ENCODE measurements at regions of chr15 and their contacts with region 1.

Region 1: GRCh38 chr15:73697033-73697467 is 12.9 kb downstream of the CD276 start:
- DNase-seq: peak in 1 of 2 experiments; percentile 60
- H3K4me3 ChIP-seq: no peak overlapping the region
- H3K27ac ChIP-seq: no peak overlapping the region
- H3K4me1 ChIP-seq: no peaks in the 10 kb centered on the region
- H3K27me3 ChIP-seq: no peaks in the 10 kb centered on the region
- CTCF ChIP-seq: no peak

Region 2: DNA sequence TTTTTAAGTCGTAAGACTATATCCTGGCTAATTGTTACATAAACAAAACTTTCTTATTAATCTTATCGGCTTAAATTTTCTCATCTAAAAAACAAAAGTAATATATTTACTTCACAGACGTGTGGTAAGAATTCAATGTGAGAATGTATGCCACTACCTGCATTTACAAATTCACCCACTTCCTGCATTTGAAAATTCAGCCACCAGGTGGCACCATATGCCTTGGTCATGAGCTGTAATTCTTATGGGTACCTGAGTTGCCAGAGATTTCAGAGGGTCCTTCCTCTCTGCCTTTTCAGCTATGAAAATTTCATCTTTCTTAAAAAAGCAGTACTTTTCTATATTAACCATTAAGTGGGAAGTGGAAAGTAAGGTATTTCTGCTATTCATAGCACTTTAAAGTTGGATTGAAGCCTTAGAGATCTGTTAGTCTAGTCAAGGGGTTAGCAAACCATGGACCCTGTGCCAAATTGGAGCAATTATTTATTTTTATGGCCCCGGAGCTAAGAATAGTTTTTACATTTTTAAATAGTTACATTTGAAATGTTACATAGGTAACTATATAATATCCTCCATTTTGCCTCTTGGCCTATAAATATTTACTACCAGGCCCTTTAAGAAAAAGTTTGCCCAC is 456.1 kb before region 1 on chr15:
- CTCF ChIA-PET with region 1: interaction called, 3 read pairs
- POLR2A ChIA-PET with region 1: no interaction called
- intact Hi-C with region 1: loop called (anchors 5 kb)
- DNase-seq: peak; percentile 49 to 53
- H3K4me3 ChIP-seq: no peak overlapping the region
- H3K27ac ChIP-seq: no peak overlapping the region
- H3K4me1 ChIP-seq: no peaks in the 10 kb centered on the region
- H3K27me3 ChIP-seq: no peaks in the 10 kb centered on the region
- CTCF ChIP-seq: peak; percentile 93

Region 3: GRCh38 chr15:73284090-73284716 is 412.8 kb before region 1 on chr15:
- CTCF ChIA-PET with region 1: interaction called, 3 read pairs
- POLR2A ChIA-PET with region 1: no interaction called
- intact Hi-C with region 1: loop called (anchors 1 kb)
- DNase-seq: no peak
- H3K4me3 ChIP-seq: no peak overlapping the region
- H3K27ac ChIP-seq: no peak overlapping the region
- H3K4me1 ChIP-seq: no peaks in the 10 kb centered on the region
- H3K27me3 ChIP-seq: no peaks in the 10 kb centered on the region
- CTCF ChIP-seq: peak; percentile 62

Region 4: DNA sequence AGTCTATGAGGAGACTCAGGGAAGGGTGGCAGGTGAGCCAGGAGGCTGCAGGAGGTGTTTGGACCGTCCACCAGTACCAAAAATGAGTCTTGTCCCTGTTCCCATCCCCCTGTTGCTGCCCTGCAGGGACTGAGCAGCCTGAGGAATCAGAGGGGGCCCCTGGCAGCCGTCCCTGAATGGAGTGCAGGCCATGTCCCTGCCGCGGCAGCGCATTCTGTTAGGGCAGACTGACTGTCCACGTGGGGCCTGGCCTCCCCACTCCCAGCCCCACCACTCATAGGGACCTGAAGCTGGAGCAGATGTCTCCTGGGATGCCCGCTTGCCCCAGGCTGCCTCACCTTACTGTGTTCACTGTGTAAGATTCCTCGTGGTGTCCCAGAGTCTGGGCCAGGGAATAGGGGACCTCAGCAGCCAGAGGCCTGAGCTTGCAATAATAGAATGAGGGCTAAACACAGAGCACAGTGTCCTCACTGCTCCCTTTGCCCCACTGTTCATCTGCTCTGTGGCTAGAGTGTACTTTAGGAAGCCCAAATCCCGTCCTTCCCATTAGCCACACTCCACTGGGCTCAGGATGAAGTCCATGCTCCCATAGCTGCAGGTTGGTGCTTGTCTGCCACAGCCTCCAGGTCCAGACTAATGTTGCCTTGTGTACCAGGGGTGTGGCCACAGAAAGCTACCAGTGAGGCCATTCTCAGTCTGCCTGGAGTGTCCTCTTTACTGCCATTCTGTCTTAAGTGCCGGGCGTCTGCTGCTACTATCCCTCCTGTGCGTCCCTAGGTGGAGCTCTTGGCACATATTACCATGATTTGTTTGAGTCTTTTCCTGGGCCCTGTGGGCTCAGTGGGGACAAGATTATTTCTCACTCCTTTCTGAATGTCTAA is 391.5 kb before region 1 on chr15:
- CTCF ChIA-PET with region 1: no interaction called
- POLR2A ChIA-PET with region 1: no interaction called
- intact Hi-C with region 1: loop called (anchors 2 kb)
- DNase-seq: peak; percentile 39 to 51
- H3K4me3 ChIP-seq: no peak overlapping the region
- H3K27ac ChIP-seq: no peak overlapping the region
- H3K4me1 ChIP-seq: no peaks in the 10 kb centered on the region
- H3K27me3 ChIP-seq: no peaks in the 10 kb centered on the region
- CTCF ChIP-seq: peak; percentile 82

Region 5: GRCh38 chr15:73560501-73561117 is 136.4 kb before region 1 on chr15:
- CTCF ChIA-PET with region 1: no interaction called
- POLR2A ChIA-PET with region 1: no interaction called
- intact Hi-C with region 1: loop called (anchors 1 kb)
- DNase-seq: peak; percentile 8 to 51
- H3K4me3 ChIP-seq: no peak overlapping the region
- H3K27ac ChIP-seq: no peak overlapping the region
- H3K4me1 ChIP-seq: peaks cover 14% of the 10 kb centered on the region
- H3K27me3 ChIP-seq: no peaks in the 10 kb centered on the region
- CTCF ChIP-seq: peak; percentile 67

Region 6: GRCh38 chr15:73677146-73677607 is 19.9 kb before region 1 on chr15:
- CTCF ChIA-PET with region 1: interaction called, 3 read pairs
- POLR2A ChIA-PET with region 1: no interaction called
- intact Hi-C with region 1: loop called (anchors 1 kb)
- DNase-seq: peak; percentile 46 to 50
- H3K4me3 ChIP-seq: no peak overlapping the region
- H3K27ac ChIP-seq: no peak overlapping the region
- H3K4me1 ChIP-seq: no peaks in the 10 kb centered on the region
- H3K27me3 ChIP-seq: no peaks in the 10 kb centered on the region
- CTCF ChIP-seq: peak; percentile 87

Region 7: DNA sequence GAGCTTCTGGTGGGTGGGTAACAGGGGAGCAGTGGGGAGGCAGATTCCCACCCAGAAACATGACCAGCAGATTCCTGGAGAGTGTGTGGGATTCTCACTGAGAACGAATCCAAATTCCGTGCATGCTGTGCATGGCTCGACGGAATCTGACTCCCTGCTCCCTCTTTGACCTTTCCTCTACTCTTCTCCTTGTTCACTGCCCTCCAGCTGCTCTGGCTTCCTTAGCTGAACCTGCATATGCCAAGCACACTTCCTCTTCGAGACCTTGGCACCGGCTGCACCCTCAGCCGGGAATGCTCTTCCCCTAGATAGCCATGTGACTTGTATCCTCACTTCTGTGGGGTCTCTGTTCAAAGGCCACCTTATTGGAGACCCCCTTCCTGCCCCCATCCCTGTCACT is 49.8 kb after region 1 on chr15:
- CTCF ChIA-PET with region 1: interaction called, 11 read pairs
- POLR2A ChIA-PET with region 1: no interaction called
- intact Hi-C with region 1: no loop called
- DNase-seq: no peak
- H3K4me3 ChIP-seq: no peak overlapping the region
- H3K27ac ChIP-seq: no peak overlapping the region
- H3K4me1 ChIP-seq: peaks cover 15% of the 10 kb centered on the region; the same call in 1 of the 2 replicates
- H3K27me3 ChIP-seq: peaks cover 18% of the 10 kb centered on the region
- CTCF ChIP-seq: no peak